PC-9 (cell line): ENCODE measurements at regions of chr16 and their contacts with region 1.

Region 1: GRCh38 chr16:11051879-11052808 is 107.8 kb downstream of the CLEC16A start:
- DNase-seq: no peak
- H3K4me3 ChIP-seq: no peak overlapping the region
- H3K27ac ChIP-seq: no peak overlapping the region
- H3K4me1 ChIP-seq: peaks cover 13% of the 10 kb centered on the region
- H3K27me3 ChIP-seq: no peaks in the 10 kb centered on the region
- CTCF ChIP-seq: no peak

Region 2: GRCh38 chr16:10937068-10937859 is 114.9 kb before region 1 on chr16:
- CTCF ChIA-PET with region 1: no interaction called
- POLR2A ChIA-PET with region 1: no interaction called
- intact Hi-C with region 1: no loop called
- DNase-seq: no peak
- H3K4me3 ChIP-seq: no peak overlapping the region
- H3K27ac ChIP-seq: no peak overlapping the region
- H3K4me1 ChIP-seq: peaks cover 19% of the 10 kb centered on the region
- H3K27me3 ChIP-seq: no peaks in the 10 kb centered on the region
- CTCF ChIP-seq: no peak

Region 3: DNA sequence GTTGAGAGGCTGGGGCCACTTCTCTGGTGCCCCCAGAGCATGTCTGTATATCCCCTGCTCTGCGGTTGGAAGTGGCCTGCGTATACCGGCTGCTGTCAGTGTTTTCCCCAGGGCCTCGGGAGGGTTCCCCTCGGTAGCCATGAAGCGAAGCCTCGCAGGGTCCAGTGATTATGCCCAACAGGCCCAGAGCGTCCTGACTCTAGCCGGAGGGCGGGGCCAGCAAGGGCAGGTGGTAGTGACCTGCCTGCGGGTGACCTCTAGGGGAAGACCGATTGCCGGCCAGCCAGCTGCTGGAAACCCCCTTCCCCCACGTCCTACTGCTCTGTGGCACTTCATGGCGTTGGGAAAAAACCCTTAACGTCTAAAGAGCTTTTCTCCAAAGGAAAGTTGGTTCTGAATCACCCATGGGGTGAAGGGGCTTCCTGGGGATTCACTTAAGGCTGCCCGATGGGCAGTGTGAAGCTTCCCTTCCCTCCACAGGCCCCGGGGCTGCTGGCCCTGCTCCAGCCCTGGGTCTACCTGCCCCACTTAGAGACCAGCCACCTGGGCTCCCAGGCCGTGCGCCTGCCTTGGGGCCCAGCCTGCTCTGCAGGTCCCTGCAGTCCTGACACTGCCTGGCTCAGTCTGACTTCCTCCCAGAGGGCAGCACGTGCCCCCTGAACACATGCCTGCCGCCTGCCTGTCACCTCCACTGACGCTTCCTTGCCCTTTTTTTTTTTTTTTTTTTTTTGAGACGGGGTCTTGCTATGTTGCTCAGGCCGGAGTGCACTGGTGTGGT is 131.1 kb after region 1 on chr16:
- CTCF ChIA-PET with region 1: interaction called, 10 read pairs
- POLR2A ChIA-PET with region 1: no interaction called
- intact Hi-C with region 1: no loop called
- DNase-seq: no peak
- H3K4me3 ChIP-seq: no peak overlapping the region
- H3K27ac ChIP-seq: no peak overlapping the region
- H3K4me1 ChIP-seq: no peaks in the 10 kb centered on the region
- H3K27me3 ChIP-seq: no peaks in the 10 kb centered on the region
- CTCF ChIP-seq: no peak